Transverse colon (tissue), 4 donors: ENCODE measurements at regions of chr2 and their contacts with region 1.

Region 1: GRCh38 chr2:73359915-73360697 is 25.5 kb upstream of the ALMS1 start:
- DNase-seq: no peak
- H3K4me3 ChIP-seq: no peak overlapping the region
- H3K27ac ChIP-seq: no peak overlapping the region
- H3K4me1 ChIP-seq: no peaks in the 10 kb centered on the region
- H3K27me3 ChIP-seq: no peaks in the 10 kb centered on the region
- CTCF ChIP-seq: peak in 2 of 5 experiments; percentile 8 to 18
- EP300 ChIP-seq: no peak
- POLR2A ChIP-seq: no peak

Region 2: DNA sequence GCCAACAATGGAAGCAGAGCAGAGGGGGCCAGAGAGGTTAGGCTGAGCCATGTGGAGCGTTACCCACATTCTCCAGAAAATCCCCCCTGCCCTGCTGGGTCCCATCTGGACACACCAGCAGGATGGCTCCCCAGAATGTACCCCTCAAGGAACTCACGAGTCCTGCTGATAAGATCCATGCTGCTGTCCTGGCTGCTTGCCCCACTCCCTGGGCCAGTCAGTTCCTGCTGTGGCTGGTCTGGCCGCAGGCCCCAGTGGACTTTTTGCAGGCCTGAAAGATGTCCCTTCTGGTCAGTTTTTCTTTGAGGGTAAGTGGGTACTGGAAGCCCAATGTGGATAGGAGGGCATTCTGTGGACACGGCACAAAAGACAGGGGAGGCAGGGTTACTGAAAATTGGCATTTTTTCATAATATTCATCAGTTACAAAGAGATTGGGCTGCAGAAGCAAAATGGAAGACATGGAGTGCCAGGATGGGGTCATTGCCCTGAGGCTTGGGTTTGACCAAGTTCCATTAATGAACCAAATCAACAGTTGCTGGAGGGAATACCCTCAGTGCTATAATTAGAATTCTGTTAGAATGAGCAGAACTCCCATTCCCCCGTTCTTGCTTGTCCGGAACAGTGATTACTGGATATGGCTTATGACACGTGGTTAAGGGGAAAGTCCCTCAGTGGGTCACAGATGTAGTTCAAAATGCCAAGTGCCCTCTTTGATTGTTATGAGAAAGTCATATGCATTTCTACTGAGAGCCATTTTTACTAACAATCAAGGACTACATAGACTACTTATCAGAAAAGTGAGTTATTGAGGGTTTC is 944.4 kb after region 1 on chr2:
- in situ Hi-C with region 1: no loop called
- intact Hi-C with region 1: loop called (anchors 5 kb)
- DNase-seq: no peak
- H3K4me3 ChIP-seq: no peak overlapping the region
- H3K27ac ChIP-seq: no peak overlapping the region
- H3K4me1 ChIP-seq: no peaks in the 10 kb centered on the region
- H3K27me3 ChIP-seq: no peaks in the 10 kb centered on the region
- CTCF ChIP-seq: no peak
- EP300 ChIP-seq: no peak
- POLR2A ChIP-seq: no peak